ENCODE measurements at regions of chr17 and their contacts with region 1.

Region 1: DNA sequence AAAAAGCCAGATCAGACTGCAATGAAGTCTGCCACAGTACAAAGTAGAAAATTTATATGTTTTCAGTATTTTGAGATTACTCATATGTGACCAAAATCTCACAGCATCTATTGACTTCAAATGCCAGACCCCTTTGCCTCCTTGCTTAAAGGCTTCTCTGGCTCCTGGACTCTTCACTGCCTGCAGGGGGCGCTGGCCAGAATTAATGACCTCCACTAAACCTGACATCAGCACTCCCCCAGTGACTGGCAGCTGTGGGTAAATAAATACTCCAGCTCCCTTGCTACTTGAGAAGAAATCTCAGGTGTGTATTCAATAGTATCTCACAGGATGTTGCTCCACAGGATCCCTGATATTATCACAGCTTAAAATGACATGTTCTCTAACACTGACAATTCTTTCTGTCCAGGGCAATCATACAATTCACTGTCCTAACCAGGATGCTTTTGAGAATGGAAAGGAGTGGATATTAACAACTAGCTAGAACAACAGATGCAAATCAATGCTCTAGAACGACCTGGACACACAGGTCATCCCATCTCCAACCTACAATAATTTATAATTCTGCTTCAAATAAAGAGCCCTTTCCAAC is 4.0 kb downstream of the BECN1 start:
- DNase-seq: peak; percentile 71
- ATAC-seq: no peak
- H3K4me3 ChIP-seq: no peak overlapping the region
- H3K4me3 Mint-ChIP-seq: no peak overlapping the region
- H3K27ac ChIP-seq: no peak overlapping the region
- H3K27ac Mint-ChIP-seq: no peak overlapping the region
- H3K4me1 ChIP-seq: peaks cover 6 to 18% of the 10 kb centered on the region in 2 donors
- H3K4me1 Mint-ChIP-seq: peaks cover 23% of the 10 kb centered on the region
- H3K27me3 ChIP-seq: no peaks in the 10 kb centered on the region
- H3K27me3 Mint-ChIP-seq: no peaks in the 10 kb centered on the region
- CTCF ChIP-seq: peak; percentile 86

Region 2: GRCh38 chr17:42720996-42721583 is 99.0 kb before region 1 on chr17:
- CTCF ChIA-PET with region 1: interaction called, 7 read pairs
- POLR2A ChIA-PET with region 1: no interaction called
- intact Hi-C with region 1: loop called (anchors 1 kb)
- DNase-seq: peak; percentile 78
- ATAC-seq: peak; percentile 82
- H3K4me3 ChIP-seq: no peak overlapping the region
- H3K4me3 Mint-ChIP-seq: no peak overlapping the region
- H3K27ac ChIP-seq: no peak overlapping the region
- H3K27ac Mint-ChIP-seq: peak overlapping the region; percentile 21
- H3K4me1 ChIP-seq: no peaks in the 10 kb centered on the region
- H3K4me1 Mint-ChIP-seq: peaks cover 3% of the 10 kb centered on the region
- H3K27me3 ChIP-seq: no peaks in the 10 kb centered on the region
- H3K27me3 Mint-ChIP-seq: no peaks in the 10 kb centered on the region
- CTCF ChIP-seq: peak; percentile 80

Region 3: GRCh38 chr17:42773290-42774035 is 46.6 kb before region 1 on chr17 and contains the start of gene VPS25:
- CTCF ChIA-PET with region 1: interaction called, 5 read pairs
- POLR2A ChIA-PET with region 1: interaction called, 6 read pairs
- intact Hi-C with region 1: loop called (anchors 1 kb)
- DNase-seq: peak; percentile 87
- ATAC-seq: peak; percentile 89
- H3K4me3 ChIP-seq: peak within 1 kb of the TSS; percentile 71 to 88 (median 82)
- H3K4me3 Mint-ChIP-seq: peak within 1 kb of the TSS; percentile 99
- H3K27ac ChIP-seq: peak within 1 kb of the TSS; percentile 81 to 85
- H3K27ac Mint-ChIP-seq: peak within 1 kb of the TSS; percentile 98
- H3K4me1 ChIP-seq: peaks cover 16 to 17% of the 10 kb centered on the region in 2 donors
- H3K4me1 Mint-ChIP-seq: peaks cover 23% of the 10 kb centered on the region
- H3K27me3 ChIP-seq: no peaks in the 10 kb centered on the region
- H3K27me3 Mint-ChIP-seq: no peaks in the 10 kb centered on the region
- CTCF ChIP-seq: no peak
- total RNA-seq, gene VPS25: 38.7 and 38.8 TPM in 2 replicates

Region 4: GRCh38 chr17:42804918-42805367 is 15.1 kb before region 1 on chr17:
- CTCF ChIA-PET with region 1: interaction called, 10 read pairs
- POLR2A ChIA-PET with region 1: interaction called, 5 read pairs
- intact Hi-C with region 1: no loop called
- DNase-seq: no peak
- ATAC-seq: no peak
- H3K4me3 ChIP-seq: no peak overlapping the region
- H3K4me3 Mint-ChIP-seq: no peak overlapping the region
- H3K27ac ChIP-seq: no peak overlapping the region
- H3K27ac Mint-ChIP-seq: no peak overlapping the region
- H3K4me1 ChIP-seq: no peaks in the 10 kb centered on the region
- H3K4me1 Mint-ChIP-seq: no peaks in the 10 kb centered on the region
- H3K27me3 ChIP-seq: no peaks in the 10 kb centered on the region
- H3K27me3 Mint-ChIP-seq: peaks cover 5% of the 10 kb centered on the region
- CTCF ChIP-seq: no peak

Region 5: DNA sequence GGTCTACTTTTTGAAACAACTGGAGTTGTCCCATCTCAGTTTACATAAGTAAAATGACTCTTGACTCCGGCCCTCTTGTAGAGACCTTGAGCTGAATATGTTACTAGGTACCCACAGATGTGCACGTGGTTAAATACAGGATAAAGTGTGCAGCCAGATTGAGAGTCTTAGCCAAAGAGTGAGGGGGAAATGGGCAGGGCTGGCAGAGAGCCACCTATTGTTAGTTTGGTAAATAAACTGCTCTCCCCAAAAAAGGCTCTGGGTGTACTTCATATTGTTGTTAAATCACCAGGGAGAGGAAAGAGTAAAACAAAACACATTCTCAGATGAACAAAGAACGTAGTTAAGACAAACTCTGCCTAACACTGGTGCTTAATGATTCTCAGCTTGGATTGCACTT is 100.9 kb after region 1 on chr17:
- CTCF ChIA-PET with region 1: no interaction called
- POLR2A ChIA-PET with region 1: no interaction called
- intact Hi-C with region 1: no loop called
- DNase-seq: no peak
- ATAC-seq: no peak
- H3K4me3 ChIP-seq: no peak overlapping the region
- H3K4me3 Mint-ChIP-seq: no peak overlapping the region
- H3K27ac ChIP-seq: no peak overlapping the region
- H3K27ac Mint-ChIP-seq: no peak overlapping the region
- H3K4me1 ChIP-seq: no peaks in the 10 kb centered on the region
- H3K4me1 Mint-ChIP-seq: no peaks in the 10 kb centered on the region
- H3K27me3 ChIP-seq: no peaks in the 10 kb centered on the region
- H3K27me3 Mint-ChIP-seq: peaks cover 11% of the 10 kb centered on the region
- CTCF ChIP-seq: no peak

Region 6: DNA sequence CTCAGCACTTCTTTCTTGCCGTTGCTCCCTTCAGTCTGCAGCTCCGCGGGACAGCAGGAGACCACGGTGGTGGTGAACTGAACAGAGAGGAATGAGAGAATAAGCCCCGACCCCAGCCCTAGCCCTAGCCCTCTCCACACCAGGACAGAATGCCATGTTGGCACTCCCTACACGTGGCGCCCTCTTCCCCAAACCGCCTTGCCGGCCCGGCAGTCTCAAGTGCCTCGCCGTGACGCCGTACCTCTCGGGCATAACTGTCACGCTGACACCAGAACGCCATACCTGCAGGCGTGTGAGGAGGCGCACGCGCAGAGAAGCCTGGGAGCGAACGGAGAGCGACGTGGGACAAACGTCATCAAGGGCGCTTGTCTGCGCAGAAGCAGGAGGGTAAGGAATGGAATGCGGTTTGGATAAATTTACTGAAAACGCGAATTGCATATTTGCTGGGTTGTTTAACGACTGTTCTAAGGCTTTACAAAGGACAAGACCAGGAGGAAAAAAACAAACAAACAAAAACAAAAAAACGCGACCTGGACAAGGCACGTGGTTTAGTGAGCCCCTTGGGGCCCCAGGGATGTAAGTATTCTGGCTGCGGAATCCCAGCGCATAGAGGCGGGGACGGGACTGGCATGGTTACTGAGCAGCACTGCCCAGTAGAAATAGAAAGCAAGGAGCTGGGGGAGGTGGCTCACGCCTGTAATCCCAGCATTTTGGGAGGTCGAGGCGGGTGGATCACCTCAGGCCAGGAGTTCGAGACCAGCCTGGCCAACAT is 144.3 kb after region 1 on chr17 and contains the start of gene AARSD1:
- CTCF ChIA-PET with region 1: no interaction called
- POLR2A ChIA-PET with region 1: no interaction called
- intact Hi-C with region 1: no loop called
- DNase-seq: peak; percentile 95
- ATAC-seq: peak; percentile 97
- H3K4me3 ChIP-seq: peak within 1 kb of the TSS; percentile 56 to 97 (median 83)
- H3K4me3 Mint-ChIP-seq: peak within 1 kb of the TSS; percentile 89
- H3K27ac ChIP-seq: peak within 1 kb of the TSS; percentile 63 to 88
- H3K27ac Mint-ChIP-seq: peak within 1 kb of the TSS; percentile 90
- H3K4me1 ChIP-seq: peaks cover 8 to 14% of the 10 kb centered on the region in 2 donors
- H3K4me1 Mint-ChIP-seq: peaks cover 17% of the 10 kb centered on the region
- H3K27me3 ChIP-seq: no peaks in the 10 kb centered on the region
- H3K27me3 Mint-ChIP-seq: no peaks in the 10 kb centered on the region
- CTCF ChIP-seq: no peak
- total RNA-seq, gene AARSD1: 56.5 and 67.4 TPM in 2 replicates

Region 7: DNA sequence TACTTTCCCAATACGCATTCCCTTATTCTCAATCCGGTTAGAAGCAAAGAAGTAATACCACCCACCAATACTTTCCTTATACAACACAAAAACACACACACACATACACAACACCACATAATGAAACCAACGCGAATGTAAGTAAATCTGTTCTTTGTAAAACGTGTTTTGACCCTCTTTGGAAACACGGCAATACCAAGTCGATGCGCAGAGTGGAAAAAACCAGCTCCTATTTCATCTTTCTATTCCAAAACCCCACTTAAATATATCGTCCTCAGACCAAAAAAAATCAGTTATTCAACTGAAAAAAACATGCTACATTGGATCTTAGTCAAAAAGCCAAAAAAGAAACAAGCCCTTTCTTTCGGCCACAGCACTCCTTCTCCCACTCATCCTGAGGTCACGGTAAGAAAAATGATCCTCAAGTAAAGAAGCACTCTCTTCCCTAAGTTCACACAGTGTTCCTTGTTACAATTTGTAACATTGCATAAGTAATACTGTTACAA is 547.8 kb after region 1 on chr17:
- CTCF ChIA-PET with region 1: no interaction called
- POLR2A ChIA-PET with region 1: interaction called, 18 read pairs
- intact Hi-C with region 1: no loop called
- DNase-seq: no peak
- ATAC-seq: peak; percentile 40
- H3K4me3 ChIP-seq: peak overlapping the region; percentile 59 to 84 (median 64)
- H3K4me3 Mint-ChIP-seq: peak overlapping the region; percentile 99
- H3K27ac ChIP-seq: peak overlapping the region; percentile 96 to 98
- H3K27ac Mint-ChIP-seq: peak overlapping the region; percentile 100
- H3K4me1 ChIP-seq: peaks cover 33 to 50% of the 10 kb centered on the region in 2 donors
- H3K4me1 Mint-ChIP-seq: peaks cover 44% of the 10 kb centered on the region
- H3K27me3 ChIP-seq: no peaks in the 10 kb centered on the region
- H3K27me3 Mint-ChIP-seq: no peaks in the 10 kb centered on the region
- CTCF ChIP-seq: no peak

Measured in B cell (primary cell).